A549 (cell line): ENCODE measurements at regions of chr9 and their contacts with region 1.

Region 1: DNA sequence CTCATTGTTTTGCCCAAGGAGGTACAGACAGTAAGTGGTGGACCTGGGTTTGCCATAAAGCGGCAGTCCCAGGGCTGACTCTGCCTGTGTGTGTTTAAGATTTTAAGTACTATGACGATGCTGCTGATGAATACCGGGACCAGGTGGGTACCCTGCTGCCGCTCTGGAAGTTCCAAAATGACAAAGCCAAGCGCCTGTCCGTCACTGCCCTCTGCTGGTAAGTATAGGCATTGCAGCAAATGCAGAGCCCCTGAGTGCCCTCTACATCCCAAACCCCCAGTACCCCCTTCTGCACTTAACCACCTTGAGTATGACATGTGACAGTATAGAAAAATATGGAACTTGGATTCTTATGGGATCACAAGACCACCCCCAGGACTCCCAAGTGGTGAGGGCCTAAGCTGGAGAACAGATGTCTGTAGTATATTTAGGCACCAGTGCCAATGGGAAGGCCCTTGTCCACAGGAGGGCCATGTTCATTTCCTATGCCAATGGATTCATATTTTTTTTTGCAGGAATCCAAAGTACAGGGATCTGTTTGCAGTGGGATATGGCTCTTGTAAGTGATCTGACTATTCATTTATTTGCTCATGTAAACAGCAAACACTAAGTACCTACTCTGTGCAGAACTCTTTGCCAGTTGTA is 22.0 kb downstream of the ENHO start:
- DNase-seq: peak; percentile 43 to 73
- ATAC-seq: peak; percentile 62 to 84
- H3K4me3 ChIP-seq: no peak overlapping the region
- H3K27ac ChIP-seq: no peak overlapping the region
- H3K4me1 ChIP-seq: peaks cover 6% of the 10 kb centered on the region; the same call in 1 of the 3 replicates
- CTCF ChIP-seq: peak; percentile 93
- EP300 ChIP-seq: no peak
- POLR2A ChIP-seq: no peak
- RAD21 ChIP-seq: peak; percentile 83 to 85

Region 2: DNA sequence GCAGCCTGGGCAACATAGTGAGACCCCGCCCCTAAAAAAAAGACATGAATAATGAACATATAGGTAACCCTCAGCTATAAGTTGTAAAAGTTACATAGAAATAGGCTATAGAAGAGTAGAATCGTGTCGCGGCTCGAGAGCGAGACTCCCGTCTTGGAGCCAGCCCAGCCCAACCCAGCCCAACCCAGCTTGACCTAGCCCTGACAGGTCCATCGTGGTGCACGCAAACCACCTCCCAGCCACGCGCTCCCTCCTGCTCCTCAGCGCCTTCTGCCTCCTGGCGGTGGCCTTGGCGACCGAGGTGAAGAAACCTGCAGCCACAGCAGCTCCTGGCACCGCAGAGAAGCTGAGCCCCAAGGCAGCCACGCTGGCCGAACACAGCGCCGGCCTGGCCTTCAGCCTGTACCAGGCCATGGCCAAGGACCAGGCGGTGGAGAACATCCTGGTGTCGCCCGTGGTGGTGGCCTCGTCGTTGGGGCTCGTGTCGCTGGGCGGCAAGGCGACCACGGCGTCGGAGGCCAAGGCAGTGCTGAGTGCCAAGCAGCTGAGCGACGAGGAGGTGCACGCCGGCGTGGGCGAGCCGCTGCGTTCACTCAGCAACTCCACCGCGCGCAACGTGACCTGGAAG is 182.5 kb before region 1 on chr9:
- CTCF ChIA-PET with region 1: no interaction called
- POLR2A ChIA-PET with region 1: no interaction called
- DNase-seq: no peak
- ATAC-seq: no peak
- H3K4me3 ChIP-seq: no peak overlapping the region
- H3K27ac ChIP-seq: no peak overlapping the region
- H3K4me1 ChIP-seq: no peaks in the 10 kb centered on the region
- CTCF ChIP-seq: no peak
- EP300 ChIP-seq: no peak
- POLR2A ChIP-seq: no peak
- RAD21 ChIP-seq: no peak

Region 3: GRCh38 chr9:34384368-34385165 is 116.2 kb before region 1 on chr9:
- CTCF ChIA-PET with region 1: interaction called, 10 read pairs
- POLR2A ChIA-PET with region 1: no interaction called
- DNase-seq: no peak
- ATAC-seq: no peak
- H3K4me3 ChIP-seq: no peak overlapping the region
- H3K27ac ChIP-seq: no peak overlapping the region
- H3K4me1 ChIP-seq: peaks cover 13% of the 10 kb centered on the region
- CTCF ChIP-seq: no peak
- EP300 ChIP-seq: no peak
- POLR2A ChIP-seq: no peak
- RAD21 ChIP-seq: no peak

Region 4: DNA sequence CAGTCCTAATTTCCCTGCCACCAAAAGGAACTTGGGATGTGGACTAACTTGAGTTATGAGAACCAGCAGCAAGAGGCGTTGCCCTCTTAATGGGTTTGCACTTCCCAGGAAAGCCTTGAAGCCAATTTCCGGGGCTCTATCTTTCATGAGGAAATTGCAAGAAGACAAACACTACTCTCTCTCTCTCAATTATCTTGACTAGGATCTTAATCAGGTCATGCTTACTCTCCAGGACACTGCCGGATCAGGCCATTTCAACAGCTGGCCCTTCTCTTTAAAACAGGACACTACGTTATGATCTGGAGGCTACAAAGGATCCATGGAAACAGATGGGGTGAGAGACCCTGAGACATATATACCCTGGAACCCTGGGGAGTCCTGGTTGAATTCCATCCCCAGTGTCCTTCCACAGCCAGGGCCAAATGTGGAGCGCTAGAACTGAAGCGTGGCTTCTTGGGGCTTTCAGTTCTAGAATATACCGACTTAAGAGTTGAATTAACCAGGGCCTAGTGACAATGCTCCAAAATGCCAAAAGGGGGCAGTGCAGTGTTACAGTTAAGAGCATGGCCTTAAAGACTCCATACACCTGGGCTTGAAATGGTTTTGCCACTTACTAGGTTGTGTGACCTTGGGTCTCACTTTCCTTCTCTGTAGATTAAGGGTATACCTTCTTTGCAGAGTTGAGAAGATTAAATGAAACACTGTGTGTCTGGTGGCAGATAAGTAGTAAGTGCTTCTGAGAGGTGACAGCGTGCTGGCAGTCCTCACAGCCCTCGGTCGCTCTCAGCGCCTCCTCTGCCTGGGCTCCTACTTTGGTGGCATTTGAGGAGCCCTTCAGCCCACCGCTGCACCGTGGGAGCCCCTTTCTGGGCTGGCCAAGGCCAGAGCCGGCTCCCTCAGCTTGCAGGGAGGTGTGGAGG is 63.5 kb before region 1 on chr9:
- CTCF ChIA-PET with region 1: interaction called, 70 read pairs
- POLR2A ChIA-PET with region 1: no interaction called
- DNase-seq: peak; percentile 51 to 87
- ATAC-seq: peak; percentile 95 to 98
- H3K4me3 ChIP-seq: no peak overlapping the region
- H3K27ac ChIP-seq: no peak overlapping the region
- H3K4me1 ChIP-seq: no peaks in the 10 kb centered on the region
- CTCF ChIP-seq: peak; percentile 87
- EP300 ChIP-seq: no peak
- POLR2A ChIP-seq: no peak
- RAD21 ChIP-seq: peak; percentile 86 to 92

Region 5: GRCh38 chr9:34463098-34463900 is 37.4 kb before region 1 on chr9:
- CTCF ChIA-PET with region 1: interaction called, 14 read pairs
- POLR2A ChIA-PET with region 1: no interaction called
- DNase-seq: peak; percentile 11 to 18
- ATAC-seq: peak; percentile 51 to 54; a peak in 3 of 6 replicates
- H3K4me3 ChIP-seq: no peak overlapping the region
- H3K27ac ChIP-seq: no peak overlapping the region
- H3K4me1 ChIP-seq: peaks cover 13% of the 10 kb centered on the region; the same call in 2 of the 3 replicates
- CTCF ChIP-seq: no peak
- EP300 ChIP-seq: no peak
- POLR2A ChIP-seq: no peak
- RAD21 ChIP-seq: no peak

Region 6: DNA sequence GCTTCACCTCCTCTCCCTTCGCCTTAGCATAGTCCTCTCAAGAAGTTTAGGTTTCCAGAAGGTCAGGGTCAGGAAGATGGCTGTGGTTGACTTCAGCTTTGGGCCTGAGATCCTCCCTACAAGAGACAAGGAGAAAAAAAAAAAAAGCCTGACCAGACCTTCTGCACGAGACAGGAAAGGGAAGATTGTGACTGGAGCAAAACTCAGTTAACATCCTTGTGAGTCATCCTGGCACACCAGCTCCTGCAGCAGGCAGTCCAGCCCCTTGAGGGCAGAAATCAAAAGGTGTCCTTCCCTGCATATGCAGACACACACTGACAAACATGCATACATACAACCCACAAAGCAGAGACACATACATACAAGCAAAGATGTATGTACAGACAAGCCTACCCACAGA is 40.1 kb after region 1 on chr9:
- CTCF ChIA-PET with region 1: interaction called, 15 read pairs
- POLR2A ChIA-PET with region 1: no interaction called
- DNase-seq: peak in 1 of 2 experiments; percentile 45
- ATAC-seq: peak; percentile 80 to 83
- H3K4me3 ChIP-seq: no peak overlapping the region
- H3K27ac ChIP-seq: no peak overlapping the region
- H3K4me1 ChIP-seq: peaks cover 12% of the 10 kb centered on the region; the same call in 1 of the 3 replicates
- CTCF ChIP-seq: no peak
- EP300 ChIP-seq: no peak
- POLR2A ChIP-seq: no peak
- RAD21 ChIP-seq: no peak